ENCODE measurements at regions of chr19 and their contacts with region 1.

Region 1: GRCh38 chr19:19138169-19138981 is at the start of gene TMEM161A:
- DNase-seq: peak; percentile 99
- CTCF ChIP-seq: no peak

Region 2: GRCh38 chr19:18700501-18701249 is 437.7 kb before region 1 on chr19:
- in situ Hi-C with region 1: no loop called
- DNase-seq: peak; percentile 86
- CTCF ChIP-seq: no peak

Region 3: GRCh38 chr19:19053508-19054314 is 84.7 kb before region 1 on chr19:
- in situ Hi-C with region 1: loop called (anchors 10 kb)
- DNase-seq: peak; percentile 69
- CTCF ChIP-seq: peak; percentile 83